ENCODE measurements at regions of chr16 and their contacts with region 1.

Region 1: DNA sequence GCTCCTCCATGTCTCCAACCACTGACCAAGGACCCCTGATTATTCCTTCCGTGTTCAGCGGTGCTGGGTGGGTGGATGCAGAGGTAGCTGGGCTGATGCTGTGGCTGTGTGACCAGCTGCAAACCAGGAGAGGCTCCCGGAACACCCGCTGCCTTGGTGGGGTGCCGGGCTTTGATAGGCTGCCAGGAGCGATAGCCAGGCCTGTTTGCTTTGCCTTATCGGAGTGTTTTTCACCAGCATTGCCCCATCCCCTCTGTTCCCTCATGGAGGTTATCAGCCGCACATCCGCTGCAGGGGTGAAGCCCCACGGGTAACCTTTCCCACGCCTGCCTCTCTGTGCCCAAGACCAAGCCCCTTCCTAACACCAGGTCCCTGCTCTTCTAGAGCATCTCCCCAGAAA is 354.3 kb downstream of the C16orf95 start:
- DNase-seq: no peak

Region 2: DNA sequence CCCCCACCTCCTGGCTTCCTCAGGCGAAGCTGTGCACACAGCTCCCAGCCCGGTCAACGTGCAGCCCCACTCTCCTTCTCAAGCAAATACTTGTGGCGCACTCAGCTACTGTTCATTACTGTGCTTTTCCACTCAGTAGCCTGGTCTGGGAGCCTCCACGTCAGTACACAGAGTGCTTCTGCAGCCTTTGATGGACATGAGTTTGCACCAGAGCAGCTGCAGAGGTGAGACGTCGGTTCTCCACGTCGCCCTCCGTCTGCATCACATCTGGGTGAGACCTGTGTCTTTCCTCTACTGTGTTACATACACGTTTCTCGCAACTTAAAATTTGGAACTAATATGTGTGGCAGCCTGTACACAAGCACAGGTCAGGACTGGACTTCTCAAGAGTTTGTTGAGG is 20.0 kb after region 1 on chr16:
- intact Hi-C with region 1: loop called in 1 of 2 experiments (anchors 1 kb)
- DNase-seq: peak; percentile 51

Region 3: GRCh38 chr16:87002717-87003413 is 40.0 kb after region 1 on chr16:
- intact Hi-C with region 1: no loop called
- DNase-seq: no peak